ENCODE measurements at regions of chr14 and their contacts with region 1.

Region 1: GRCh38 chr14:39432179-39432618 is at the start of gene FBXO33:
- DNase-seq: peak; percentile 100
- H3K4me3 ChIP-seq: peak within 1 kb of the TSS; percentile 76 to 92 (median 91)
- H3K27ac ChIP-seq: peak within 1 kb of the TSS; percentile 96 to 97 (median 97)
- H3K4me1 ChIP-seq: peaks cover 24 to 47% (median 46%) of the 10 kb centered on the region in 4 donors
- H3K27me3 ChIP-seq: no peaks in the 10 kb centered on the region
- CTCF ChIP-seq: no peak
- EP300 ChIP-seq: peak; percentile 32
- POLR2A ChIP-seq: no peak
- total RNA-seq, gene FBXO33: 9.1 to 21.9 (median 12.8) TPM

Region 2: GRCh38 chr14:39102969-39103957 is 328.9 kb before region 1 on chr14 and contains the start of gene SEC23A:
- intact Hi-C with region 1: loop called (anchors 5 kb)
- DNase-seq: peak; percentile 98
- H3K4me3 ChIP-seq: peak within 1 kb of the TSS; percentile 84 to 99 (median 90)
- H3K27ac ChIP-seq: peak within 1 kb of the TSS; percentile 98 to 100 (median 99)
- H3K4me1 ChIP-seq: peaks cover 16 to 61% (median 51%) of the 10 kb centered on the region in 4 donors
- H3K27me3 ChIP-seq: no peaks in the 10 kb centered on the region
- CTCF ChIP-seq: peak in 1 of 3 experiments; percentile 4
- EP300 ChIP-seq: no peak
- POLR2A ChIP-seq: peak; percentile 83
- total RNA-seq, gene SEC23A: 181 to 222 (median 203) TPM

Region 3: DNA sequence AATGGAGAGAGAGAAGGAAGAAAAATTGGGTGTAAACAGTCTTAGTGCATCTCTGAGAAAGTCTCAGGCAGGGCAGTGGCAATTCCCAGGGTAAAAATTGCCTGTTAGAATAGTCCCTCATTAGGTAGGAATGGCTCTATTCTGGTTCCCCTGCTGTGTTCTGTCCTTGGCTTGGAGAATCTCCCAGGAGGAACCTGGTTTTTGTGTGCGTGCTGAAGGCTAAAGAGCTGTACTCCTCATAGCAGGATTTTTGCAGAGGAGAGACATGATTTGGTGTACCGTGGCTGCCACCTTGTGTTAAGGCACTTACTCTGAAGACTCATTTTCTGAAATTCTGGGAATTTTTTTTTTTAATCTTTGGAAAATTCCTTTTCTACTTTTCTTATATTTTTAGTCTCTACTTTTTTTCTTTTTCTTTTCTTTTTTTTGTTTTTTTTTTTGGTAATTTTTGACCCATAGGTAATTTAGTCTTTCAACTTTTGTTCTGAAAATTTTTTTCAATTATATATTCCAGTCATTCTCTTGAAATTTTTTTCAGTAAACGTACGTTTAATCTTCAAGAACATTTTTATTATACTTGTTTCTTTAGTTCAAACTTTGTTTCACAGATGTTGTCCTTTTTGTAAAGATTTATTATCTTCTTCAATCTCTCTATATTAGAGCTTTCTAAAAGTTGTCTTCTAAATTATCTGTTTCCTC is 63.8 kb before region 1 on chr14:
- intact Hi-C with region 1: no loop called
- DNase-seq: no peak
- H3K4me3 ChIP-seq: no peak overlapping the region
- H3K27ac ChIP-seq: no peak overlapping the region
- H3K4me1 ChIP-seq: peaks cover 0 to 5% (median 1%) of the 10 kb centered on the region in 4 donors
- H3K27me3 ChIP-seq: no peaks in the 10 kb centered on the region
- CTCF ChIP-seq: peak; percentile 35 to 51 (median 36)
- EP300 ChIP-seq: no peak
- POLR2A ChIP-seq: no peak

Region 4: DNA sequence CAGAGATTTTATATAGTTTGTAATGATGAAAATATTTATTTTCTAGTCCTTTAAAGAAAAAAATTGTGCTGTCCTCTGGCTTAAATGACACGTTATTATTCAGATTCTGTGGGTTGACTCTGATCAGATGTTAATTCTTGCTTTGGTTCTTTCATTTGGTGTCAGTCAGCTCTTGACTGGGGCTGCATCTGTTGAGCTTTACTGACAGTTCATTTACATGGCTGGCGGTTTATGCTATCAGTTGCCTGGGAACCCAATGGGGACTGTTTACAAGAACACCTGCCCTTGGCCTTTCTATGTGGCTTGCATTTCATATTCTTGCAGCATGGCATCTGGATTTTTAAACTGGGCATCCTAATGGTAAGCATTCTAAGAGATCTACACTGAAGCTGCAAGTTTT is 667.1 kb after region 1 on chr14:
- intact Hi-C with region 1: no loop called
- DNase-seq: no peak
- H3K4me3 ChIP-seq: no peak overlapping the region
- H3K27ac ChIP-seq: no peak overlapping the region
- H3K4me1 ChIP-seq: no peaks in the 10 kb centered on the region
- H3K27me3 ChIP-seq: no peaks in the 10 kb centered on the region
- CTCF ChIP-seq: no peak
- EP300 ChIP-seq: no peak
- POLR2A ChIP-seq: no peak

Measured in esophagus muscularis mucosa (tissue), 4 donors.